ENCODE measurements at regions of chr4 and their contacts with region 1.

Region 1: GRCh38 chr4:123564758-123565346 is 168.3 kb downstream of the SPRY1 start:
- DNase-seq: peak; percentile 89 to 93 (median 93)
- H3K4me3 ChIP-seq: no peak overlapping the region
- H3K27ac ChIP-seq: no peak overlapping the region
- H3K4me1 ChIP-seq: peaks cover 0 to 6% (median 3%) of the 10 kb centered on the region in 4 experiments
- H3K27me3 ChIP-seq: no peaks in the 10 kb centered on the region

Region 2: GRCh38 chr4:123412091-123412505 is 152.8 kb before region 1 on chr4:
- CTCF ChIA-PET with region 1: interaction called, 18 read pairs
- POLR2A ChIA-PET with region 1: interaction called, 3 read pairs
- DNase-seq: peak in 2 of 3 donors; percentile 40 to 64
- H3K4me3 ChIP-seq: peak overlapping the region in 1 of 7 experiments; percentile 41
- H3K27ac ChIP-seq: no peak overlapping the region
- H3K4me1 ChIP-seq: peaks cover 33 to 60% (median 46%) of the 10 kb centered on the region in 4 experiments
- H3K27me3 ChIP-seq: no peaks in the 10 kb centered on the region

Region 3: GRCh38 chr4:123580981-123581664 is 16.3 kb after region 1 on chr4:
- CTCF ChIA-PET with region 1: interaction called, 20 read pairs
- POLR2A ChIA-PET with region 1: no interaction called
- DNase-seq: no peak
- H3K4me3 ChIP-seq: no peak overlapping the region
- H3K27ac ChIP-seq: no peak overlapping the region
- H3K4me1 ChIP-seq: no peaks in the 10 kb centered on the region
- H3K27me3 ChIP-seq: no peaks in the 10 kb centered on the region

Region 4: GRCh38 chr4:123588631-123589241 is 23.9 kb after region 1 on chr4:
- CTCF ChIA-PET with region 1: interaction called, 14 read pairs
- POLR2A ChIA-PET with region 1: no interaction called
- DNase-seq: peak in 1 of 3 donors; percentile 24
- H3K4me3 ChIP-seq: no peak overlapping the region
- H3K27ac ChIP-seq: no peak overlapping the region
- H3K4me1 ChIP-seq: peaks cover 14 to 25% (median 16%) of the 10 kb centered on the region in 4 experiments
- H3K27me3 ChIP-seq: no peaks in the 10 kb centered on the region

Region 5: GRCh38 chr4:123649645-123650391 is 85.0 kb after region 1 on chr4:
- CTCF ChIA-PET with region 1: interaction called, 21 read pairs
- POLR2A ChIA-PET with region 1: no interaction called
- DNase-seq: peak in 1 of 3 donors; percentile 3
- H3K4me3 ChIP-seq: no peak overlapping the region
- H3K27ac ChIP-seq: no peak overlapping the region
- H3K4me1 ChIP-seq: peaks cover 0 to 12% (median 5%) of the 10 kb centered on the region in 4 experiments
- H3K27me3 ChIP-seq: no peaks in the 10 kb centered on the region

Measured in common myeloid progenitor, CD34-positive (primary cell).